ENCODE measurements at regions of chr1 and their contacts with region 1.

Region 1: GRCh38 chr1:216221260-216221700 is 202.0 kb downstream of the USH2A start:
- DNase-seq: peak; percentile 59 to 70
- H3K4me3 ChIP-seq: peak overlapping the region; percentile 37
- H3K4me3 Mint-ChIP-seq: peak overlapping the region; percentile 73
- H3K27ac Mint-ChIP-seq: peak overlapping the region; percentile 24
- H3K4me1 ChIP-seq: no peaks in the 10 kb centered on the region
- H3K4me1 Mint-ChIP-seq: peaks cover 13% of the 10 kb centered on the region
- H3K27me3 ChIP-seq: no peaks in the 10 kb centered on the region
- H3K27me3 Mint-ChIP-seq: no peaks in the 10 kb centered on the region
- CTCF ChIP-seq: peak; percentile 59 to 83

Region 2: GRCh38 chr1:215888159-215888558 is 333.1 kb before region 1 on chr1:
- CTCF ChIA-PET with region 1: interaction called, 3 read pairs
- POLR2A ChIA-PET with region 1: no interaction called
- intact Hi-C with region 1: loop called (anchors 2 kb)
- DNase-seq: peak in 1 of 2 experiments; percentile 28
- H3K4me3 ChIP-seq: no peak overlapping the region
- H3K4me3 Mint-ChIP-seq: no peak overlapping the region
- H3K27ac Mint-ChIP-seq: no peak overlapping the region
- H3K4me1 ChIP-seq: 0 out of 2 replicates have a peak, but pooled peaks cover 7% of the 10 kb centered on the region
- H3K4me1 Mint-ChIP-seq: peaks cover 7% of the 10 kb centered on the region
- H3K27me3 ChIP-seq: no peaks in the 10 kb centered on the region
- H3K27me3 Mint-ChIP-seq: no peaks in the 10 kb centered on the region
- CTCF ChIP-seq: no peak

Region 3: DNA sequence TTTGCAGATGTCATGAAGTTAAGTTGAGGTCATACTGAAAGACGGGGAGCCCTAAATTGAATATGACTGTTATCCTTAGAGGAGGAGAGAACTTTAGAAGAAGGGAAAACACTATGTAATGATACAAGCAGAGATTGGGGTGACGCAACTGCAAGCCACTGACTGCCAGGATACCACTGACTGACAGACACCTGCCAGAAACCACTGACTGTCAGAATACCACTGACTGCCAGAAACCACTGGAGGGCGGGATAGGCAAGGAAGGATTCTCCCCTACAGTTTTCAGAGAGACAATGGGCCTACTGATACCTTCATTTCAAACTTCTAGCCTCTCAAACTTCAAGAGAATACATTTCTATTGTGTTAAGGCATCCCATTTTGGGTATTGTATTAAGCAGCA is 186.8 kb before region 1 on chr1:
- CTCF ChIA-PET with region 1: no interaction called
- POLR2A ChIA-PET with region 1: no interaction called
- intact Hi-C with region 1: loop called (anchors 2 kb)
- DNase-seq: peak; percentile 50 to 54
- H3K4me3 ChIP-seq: no peak overlapping the region
- H3K4me3 Mint-ChIP-seq: no peak overlapping the region
- H3K27ac Mint-ChIP-seq: no peak overlapping the region
- H3K4me1 ChIP-seq: no peaks in the 10 kb centered on the region
- H3K4me1 Mint-ChIP-seq: no peaks in the 10 kb centered on the region
- H3K27me3 ChIP-seq: no peaks in the 10 kb centered on the region; the same call in 1 of the 2 replicates
- H3K27me3 Mint-ChIP-seq: no peaks in the 10 kb centered on the region
- CTCF ChIP-seq: peak; percentile 53 to 60

Region 4: DNA sequence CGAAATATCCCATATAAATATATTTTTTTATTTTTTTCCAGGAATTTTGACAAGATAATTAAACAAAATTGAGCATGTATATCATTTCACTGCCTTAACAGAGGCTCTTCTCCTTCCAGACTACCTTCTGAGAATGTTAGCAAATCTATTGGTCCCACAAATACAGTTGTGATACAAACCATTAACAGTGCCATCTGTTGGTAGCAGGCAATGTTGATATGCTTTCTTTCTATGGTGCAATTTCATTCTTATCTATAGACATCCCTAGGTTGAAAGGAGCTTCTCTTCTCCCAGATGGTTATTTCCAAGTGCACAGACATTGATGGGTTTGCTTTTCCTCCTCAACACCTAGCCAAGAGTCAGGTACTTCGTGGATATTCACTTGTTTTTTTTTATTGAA is 101.7 kb before region 1 on chr1:
- CTCF ChIA-PET with region 1: interaction called, 9 read pairs
- POLR2A ChIA-PET with region 1: no interaction called
- intact Hi-C with region 1: loop called (anchors 5 kb)
- DNase-seq: peak in 1 of 2 experiments; percentile 36
- H3K4me3 ChIP-seq: no peak overlapping the region
- H3K4me3 Mint-ChIP-seq: no peak overlapping the region
- H3K27ac Mint-ChIP-seq: no peak overlapping the region
- H3K4me1 ChIP-seq: no peaks in the 10 kb centered on the region
- H3K4me1 Mint-ChIP-seq: no peaks in the 10 kb centered on the region
- H3K27me3 ChIP-seq: no peaks in the 10 kb centered on the region
- H3K27me3 Mint-ChIP-seq: no peaks in the 10 kb centered on the region
- CTCF ChIP-seq: peak; percentile 53 to 61

Region 5: DNA sequence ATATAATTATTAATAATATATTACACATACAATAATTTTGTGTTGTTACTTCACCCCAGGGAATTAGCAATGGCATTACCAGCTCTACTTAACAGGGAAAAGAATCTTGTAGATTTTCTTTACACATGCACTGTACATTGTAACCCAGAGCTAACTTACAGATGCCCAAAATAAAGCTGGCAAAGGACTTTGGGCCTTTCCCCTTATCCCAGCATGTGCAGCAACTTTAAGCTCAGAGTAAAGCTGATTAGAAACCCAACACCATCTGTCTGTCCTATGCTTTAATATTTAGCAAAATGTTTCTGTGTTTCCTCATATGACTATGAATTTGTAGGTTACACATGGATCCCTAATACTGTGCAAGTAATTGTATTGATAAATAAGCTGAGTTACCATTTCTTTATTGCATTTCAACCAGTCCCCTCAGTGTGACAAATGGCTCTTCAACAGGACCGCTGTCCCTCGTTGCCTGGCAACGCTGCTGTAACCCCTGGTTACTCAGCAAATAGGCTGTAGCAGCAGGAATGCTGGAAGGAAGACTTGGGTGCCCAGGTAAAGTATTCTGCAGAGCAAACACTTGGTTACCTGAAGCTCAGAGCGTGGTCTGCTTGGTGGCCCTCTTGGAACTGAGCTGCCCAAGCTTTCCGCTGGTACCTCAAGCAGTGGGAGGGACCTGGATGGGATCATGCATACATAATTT is 201.7 kb after region 1 on chr1 and contains the start of gene USH2A:
- CTCF ChIA-PET with region 1: no interaction called
- POLR2A ChIA-PET with region 1: no interaction called
- intact Hi-C with region 1: loop called (anchors 10 kb)
- DNase-seq: peak; percentile 15 to 43
- H3K4me3 ChIP-seq: no peak within 1 kb of the TSS
- H3K4me3 Mint-ChIP-seq: no peak within 1 kb of the TSS
- H3K27ac Mint-ChIP-seq: no peak within 1 kb of the TSS
- H3K4me1 ChIP-seq: peaks cover 20% of the 10 kb centered on the region
- H3K4me1 Mint-ChIP-seq: peaks cover 6% of the 10 kb centered on the region
- H3K27me3 ChIP-seq: no peaks in the 10 kb centered on the region
- H3K27me3 Mint-ChIP-seq: no peaks in the 10 kb centered on the region
- CTCF ChIP-seq: no peak
- total RNA-seq, gene USH2A: 0.11 and 0.26 TPM in 2 replicates